Breast epithelium (tissue), 4 donors: ENCODE measurements at regions of chr12 and their contacts with region 1.

Region 1: GRCh38 chr12:94149119-94149780 is 873 bp downstream of the PLXNC1 start:
- DNase-seq: no peak
- H3K4me3 ChIP-seq: peak overlapping the region; percentile 66 to 83 (median 66)
- H3K27ac ChIP-seq: peak overlapping the region in 1 of 2 donors; percentile 63
- H3K4me1 ChIP-seq: peaks cover 0 to 7% of the 10 kb centered on the region in 2 donors
- H3K27me3 ChIP-seq: peaks cover 0 to 17% of the 10 kb centered on the region in 2 donors
- CTCF ChIP-seq: no peak
- POLR2A ChIP-seq: no peak

Region 2: DNA sequence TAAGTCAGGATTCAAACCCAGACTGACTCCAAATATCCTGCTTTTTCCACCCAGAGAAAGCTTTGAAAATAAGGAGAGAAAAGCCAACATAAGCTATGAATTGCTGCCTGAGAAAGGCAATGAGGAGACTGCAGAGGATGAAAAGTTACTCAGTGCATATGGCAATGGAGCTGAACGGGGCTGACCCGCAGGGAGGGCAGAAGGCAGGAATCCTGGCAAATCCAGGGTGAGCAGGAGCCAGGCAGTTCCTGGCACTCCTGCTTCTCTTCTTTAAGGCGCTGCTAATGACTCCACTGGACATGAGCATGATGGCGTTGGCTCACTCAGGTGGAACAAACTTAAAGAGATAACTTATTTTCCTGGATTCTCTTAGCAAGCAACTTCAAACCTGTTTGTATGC is 596.3 kb after region 1 on chr12:
- intact Hi-C with region 1: loop called (anchors 10 kb)
- DNase-seq: no peak
- H3K4me3 ChIP-seq: no peak overlapping the region
- H3K27ac ChIP-seq: no peak overlapping the region
- H3K4me1 ChIP-seq: no peaks in the 10 kb centered on the region
- H3K27me3 ChIP-seq: no peaks in the 10 kb centered on the region
- CTCF ChIP-seq: no peak
- POLR2A ChIP-seq: no peak